HepG2 (cell line): ENCODE measurements at regions of chr1 and their contacts with region 1.

Region 1: DNA sequence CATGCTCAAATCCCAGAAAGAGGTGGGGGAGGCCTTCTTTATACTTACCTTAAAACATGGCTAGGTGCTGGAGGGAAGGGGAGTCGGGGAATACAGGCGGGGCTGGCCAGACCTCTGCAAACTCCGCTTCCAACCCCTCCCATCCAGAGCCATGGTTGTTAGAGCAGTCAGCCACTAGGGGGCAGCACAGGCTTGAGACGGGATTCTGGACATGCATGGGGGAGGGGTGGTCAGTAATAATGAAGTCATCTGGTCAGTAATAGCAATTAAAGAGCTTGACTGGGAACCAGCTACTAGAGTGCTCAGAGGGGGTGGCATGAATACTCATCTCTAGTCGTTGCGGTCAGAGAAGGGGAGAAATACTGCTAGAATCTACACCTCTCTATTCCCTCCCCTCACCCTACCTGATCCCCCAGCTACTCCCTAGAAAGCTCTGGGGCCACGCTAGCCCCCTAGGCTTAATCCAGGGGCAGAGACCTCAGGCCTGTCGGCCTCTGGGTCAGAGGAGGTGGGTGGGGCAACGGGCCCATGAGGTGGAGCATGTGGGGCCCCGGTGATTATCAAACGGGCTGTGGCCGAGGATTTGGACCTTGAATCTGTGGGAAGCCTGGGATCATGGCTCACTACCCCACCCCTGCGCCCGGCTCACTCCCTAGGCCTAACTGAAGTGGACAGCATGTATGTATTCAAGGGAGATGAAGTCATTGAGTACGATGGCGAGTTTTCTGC is 2.9 kb downstream of the CASQ1 start:
- DNase-seq: peak; percentile 85
- ATAC-seq: peak; percentile 88
- H3K4me3 ChIP-seq: peak overlapping the region; percentile 47 to 70 (median 55)
- H3K27ac ChIP-seq: peak overlapping the region; percentile 53
- H3K4me1 ChIP-seq: peaks cover 34% of the 10 kb centered on the region
- H3K27me3 ChIP-seq: peaks cover 1 to 21% of the 10 kb centered on the region in 2 experiments; a peak in 3 of 5 replicates
- CTCF ChIP-seq: peak; percentile 95
- EP300 ChIP-seq: peak in 1 of 2 experiments; percentile 24; a peak in 1 of 4 replicates
- POLR2A ChIP-seq: no peak
- RAD21 ChIP-seq: peak; percentile 95

Region 2: GRCh38 chr1:160219062-160219929 is 26.0 kb after region 1 on chr1:
- CTCF ChIA-PET with region 1: interaction called, 13 read pairs
- POLR2A ChIA-PET with region 1: interaction called, 4 read pairs
- in situ Hi-C with region 1: no loop called
- intact Hi-C with region 1: loop called (anchors 1 kb)
- DNase-seq: peak; percentile 45
- ATAC-seq: peak; percentile 86
- H3K4me3 ChIP-seq: no peak overlapping the region
- H3K27ac ChIP-seq: no peak overlapping the region
- H3K4me1 ChIP-seq: peaks cover 16% of the 10 kb centered on the region
- H3K27me3 ChIP-seq: no peaks in the 10 kb centered on the region
- CTCF ChIP-seq: peak; percentile 72
- EP300 ChIP-seq: no peak
- POLR2A ChIP-seq: no peak
- RAD21 ChIP-seq: 0 out of 2 replicates have a peak, but pooled peaks have one; percentile 52

Region 3: GRCh38 chr1:160232911-160233310 is 39.7 kb after region 1 on chr1:
- CTCF ChIA-PET with region 1: no interaction called
- POLR2A ChIA-PET with region 1: no interaction called
- in situ Hi-C with region 1: no loop called
- intact Hi-C with region 1: no loop called
- DNase-seq: no peak
- ATAC-seq: no peak
- H3K4me3 ChIP-seq: no peak overlapping the region
- H3K27ac ChIP-seq: no peak overlapping the region
- H3K4me1 ChIP-seq: no peaks in the 10 kb centered on the region
- H3K27me3 ChIP-seq: no peaks in the 10 kb centered on the region
- CTCF ChIP-seq: no peak
- EP300 ChIP-seq: no peak
- POLR2A ChIP-seq: no peak
- RAD21 ChIP-seq: no peak

Region 4: GRCh38 chr1:160291248-160292220 is 98.3 kb after region 1 on chr1:
- CTCF ChIA-PET with region 1: interaction called, 13 read pairs
- POLR2A ChIA-PET with region 1: interaction called, 3 read pairs
- in situ Hi-C with region 1: loop called (anchors 5 kb)
- intact Hi-C with region 1: loop called (anchors 1 kb)
- DNase-seq: peak; percentile 65
- ATAC-seq: peak; percentile 91
- H3K4me3 ChIP-seq: no peak overlapping the region
- H3K27ac ChIP-seq: no peak overlapping the region
- H3K4me1 ChIP-seq: peaks cover 17% of the 10 kb centered on the region
- H3K27me3 ChIP-seq: no peaks in the 10 kb centered on the region
- CTCF ChIP-seq: peak; percentile 84
- EP300 ChIP-seq: no peak
- POLR2A ChIP-seq: no peak
- RAD21 ChIP-seq: peak; percentile 31; the same call in 1 of the 2 replicates

Region 5: GRCh38 chr1:160376525-160377131 is 183.4 kb after region 1 on chr1:
- CTCF ChIA-PET with region 1: interaction called, 8 read pairs
- POLR2A ChIA-PET with region 1: no interaction called
- in situ Hi-C with region 1: no loop called
- intact Hi-C with region 1: loop called (anchors 10 kb)
- DNase-seq: peak; percentile 58
- ATAC-seq: peak; percentile 87
- H3K4me3 ChIP-seq: no peak overlapping the region
- H3K27ac ChIP-seq: no peak overlapping the region
- H3K4me1 ChIP-seq: peaks cover 8% of the 10 kb centered on the region
- H3K27me3 ChIP-seq: no peaks in the 10 kb centered on the region; a peak in 3 of 5 replicates
- CTCF ChIP-seq: peak; percentile 92
- EP300 ChIP-seq: no peak
- POLR2A ChIP-seq: no peak
- RAD21 ChIP-seq: peak; percentile 84

Region 6: DNA sequence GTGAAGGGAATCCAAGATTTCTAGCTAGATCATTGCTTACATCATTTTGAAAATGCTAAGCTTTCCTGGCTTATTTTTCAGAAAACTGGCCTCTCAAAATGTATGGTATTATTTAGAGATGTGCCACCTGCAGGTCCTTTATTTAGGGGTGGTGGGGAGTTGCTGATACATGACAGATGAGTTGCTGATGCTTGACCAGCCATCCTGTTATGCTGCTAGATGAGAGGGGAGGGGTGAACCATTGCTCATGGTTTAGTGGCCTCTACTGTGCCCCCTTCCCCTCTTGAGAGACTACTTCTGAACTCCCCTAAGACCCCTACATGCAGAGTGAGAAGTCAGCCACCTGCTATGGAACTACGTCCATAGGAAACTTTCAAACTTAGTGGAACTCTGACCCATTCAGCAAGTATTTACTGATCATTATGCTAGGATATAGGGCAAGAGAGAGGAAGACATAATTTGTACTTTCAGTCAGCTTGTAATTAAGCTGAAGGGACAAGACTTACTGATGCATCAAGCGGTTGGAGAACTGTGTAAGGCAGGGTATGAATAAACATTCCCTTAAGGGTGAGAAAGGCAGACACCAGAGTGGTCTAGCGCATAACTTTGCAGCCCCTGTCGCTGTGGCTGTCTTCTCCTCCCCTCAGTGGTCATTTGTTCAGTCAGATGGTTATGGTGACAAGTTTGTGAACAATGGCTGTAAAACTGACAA is 295.2 kb after region 1 on chr1:
- CTCF ChIA-PET with region 1: no interaction called
- POLR2A ChIA-PET with region 1: no interaction called
- in situ Hi-C with region 1: no loop called
- intact Hi-C with region 1: no loop called
- DNase-seq: no peak
- ATAC-seq: no peak
- H3K4me3 ChIP-seq: no peak overlapping the region
- H3K27ac ChIP-seq: no peak overlapping the region
- H3K4me1 ChIP-seq: no peaks in the 10 kb centered on the region
- H3K27me3 ChIP-seq: no peaks in the 10 kb centered on the region
- CTCF ChIP-seq: no peak
- EP300 ChIP-seq: no peak
- POLR2A ChIP-seq: no peak
- RAD21 ChIP-seq: no peak